IMR-90 (cell line): ENCODE measurements at regions of chr7 and their contacts with region 1.

Region 1: DNA sequence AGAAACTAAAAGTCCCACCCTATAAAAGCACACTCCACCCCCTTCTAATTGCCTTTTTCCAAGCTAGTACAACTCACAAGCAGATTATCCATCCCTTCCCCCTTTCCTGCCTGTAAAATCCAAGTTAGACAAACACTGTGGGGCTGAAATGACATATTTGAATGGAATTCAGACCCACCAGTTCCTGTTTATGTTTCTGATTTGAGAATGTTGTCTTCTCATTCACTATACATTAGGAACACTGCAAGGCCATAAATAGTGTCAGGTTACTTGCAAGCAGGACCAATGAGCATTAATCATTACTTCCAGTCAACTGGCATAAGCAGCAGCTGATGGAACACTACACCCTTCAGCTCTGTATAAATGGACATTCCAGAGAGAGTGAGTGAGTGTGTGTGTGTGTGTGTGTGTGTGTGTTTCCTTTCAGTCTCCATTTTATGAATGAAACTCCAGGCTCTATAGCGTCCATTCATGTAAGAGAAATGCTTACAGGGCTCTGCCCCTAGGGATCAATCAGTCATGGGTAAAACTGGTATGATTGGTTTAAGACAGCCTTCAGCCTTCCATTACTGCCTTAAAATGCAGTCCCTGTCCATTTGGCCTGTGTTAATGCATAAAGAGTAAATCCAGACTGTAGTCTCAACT is 69.3 kb downstream of the ETV1 start:
- DNase-seq: peak; percentile 100
- ATAC-seq: peak; percentile 94
- H3K4me3 ChIP-seq: no peak overlapping the region
- H3K27ac ChIP-seq: peak overlapping the region; percentile 76
- H3K4me1 ChIP-seq: peaks cover 1% of the 10 kb centered on the region; the same call in 1 of the 2 replicates
- H3K27me3 ChIP-seq: no peaks in the 10 kb centered on the region
- CTCF ChIP-seq: no peak
- POLR2A ChIP-seq: no peak
- RAD21 ChIP-seq: peak; percentile 18; the same call in 1 of the 2 replicates

Region 2: DNA sequence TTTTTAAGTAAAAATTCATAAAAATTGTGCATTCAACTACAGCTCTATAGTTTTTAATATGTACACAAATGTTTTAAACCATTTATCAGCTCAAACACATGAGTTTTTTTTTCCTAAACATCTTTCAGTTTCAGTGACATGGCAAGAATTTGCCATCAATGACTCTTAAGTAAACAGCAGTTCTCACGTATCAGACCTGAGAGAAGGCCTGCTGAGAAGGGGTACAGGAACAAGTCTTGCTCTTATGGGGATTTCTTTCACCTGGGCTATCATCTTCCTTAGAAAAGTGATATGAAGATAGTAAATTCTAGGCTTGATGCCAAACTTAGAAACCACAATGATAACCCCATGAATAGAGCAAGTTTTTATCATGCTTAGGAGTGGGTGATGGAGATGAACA is 765.0 kb before region 1 on chr7:
- CTCF ChIA-PET with region 1: no interaction called
- POLR2A ChIA-PET with region 1: no interaction called
- dilution Hi-C with region 1: no loop called
- in situ Hi-C with region 1: no loop called
- intact Hi-C with region 1: loop called (anchors 5 kb)
- DNase-seq: peak; percentile 10
- ATAC-seq: no peak
- H3K4me3 ChIP-seq: no peak overlapping the region
- H3K27ac ChIP-seq: no peak overlapping the region
- H3K4me1 ChIP-seq: no peaks in the 10 kb centered on the region
- H3K27me3 ChIP-seq: no peaks in the 10 kb centered on the region; the same call in 1 of the 2 replicates
- CTCF ChIP-seq: no peak
- POLR2A ChIP-seq: no peak
- RAD21 ChIP-seq: no peak

Region 3: DNA sequence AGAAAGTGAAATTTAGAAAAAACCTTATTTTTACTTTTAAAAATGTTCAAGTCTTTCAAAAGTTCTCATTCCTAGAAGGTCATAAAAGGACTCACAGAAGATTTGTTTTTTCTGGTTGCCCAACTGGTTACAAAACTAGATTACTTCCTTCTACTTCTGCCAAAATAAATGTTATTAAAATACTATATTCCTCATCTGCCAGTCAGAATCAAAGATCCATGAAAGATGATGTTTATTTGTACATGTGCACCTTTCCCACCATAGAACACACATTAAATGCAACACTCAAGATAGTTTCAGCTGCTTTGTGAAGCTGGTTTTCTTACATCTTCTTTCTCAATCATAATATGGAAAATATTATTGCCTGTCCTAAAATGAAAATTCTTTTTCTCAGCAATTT is 396.1 kb before region 1 on chr7:
- CTCF ChIA-PET with region 1: interaction called, 3 read pairs
- POLR2A ChIA-PET with region 1: no interaction called
- dilution Hi-C with region 1: no loop called
- in situ Hi-C with region 1: no loop called
- intact Hi-C with region 1: loop called (anchors 2 kb)
- DNase-seq: no peak
- ATAC-seq: no peak
- H3K4me3 ChIP-seq: no peak overlapping the region
- H3K27ac ChIP-seq: no peak overlapping the region
- H3K4me1 ChIP-seq: no peaks in the 10 kb centered on the region
- H3K27me3 ChIP-seq: no peaks in the 10 kb centered on the region
- CTCF ChIP-seq: no peak
- POLR2A ChIP-seq: no peak
- RAD21 ChIP-seq: no peak

Region 4: GRCh38 chr7:13725591-13725990 is 194.6 kb before region 1 on chr7:
- CTCF ChIA-PET with region 1: no interaction called
- POLR2A ChIA-PET with region 1: no interaction called
- dilution Hi-C with region 1: no loop called
- in situ Hi-C with region 1: no loop called
- intact Hi-C with region 1: loop called (anchors 5 kb)
- DNase-seq: no peak
- ATAC-seq: no peak
- H3K4me3 ChIP-seq: no peak overlapping the region
- H3K27ac ChIP-seq: no peak overlapping the region
- H3K4me1 ChIP-seq: no peaks in the 10 kb centered on the region
- H3K27me3 ChIP-seq: no peaks in the 10 kb centered on the region
- CTCF ChIP-seq: 0 out of 2 replicates have a peak, but pooled peaks have one; percentile 5
- POLR2A ChIP-seq: no peak
- RAD21 ChIP-seq: 0 out of 2 replicates have a peak, but pooled peaks have one; percentile 6

Region 5: GRCh38 chr7:13850185-13850752 is 69.9 kb before region 1 on chr7:
- CTCF ChIA-PET with region 1: no interaction called
- POLR2A ChIA-PET with region 1: no interaction called
- dilution Hi-C with region 1: no loop called
- in situ Hi-C with region 1: no loop called
- intact Hi-C with region 1: loop called (anchors 1 kb)
- DNase-seq: peak; percentile 99
- ATAC-seq: peak; percentile 87
- H3K4me3 ChIP-seq: no peak overlapping the region
- H3K27ac ChIP-seq: peak overlapping the region; percentile 91
- H3K4me1 ChIP-seq: peaks cover 10% of the 10 kb centered on the region
- H3K27me3 ChIP-seq: no peaks in the 10 kb centered on the region
- CTCF ChIP-seq: no peak
- POLR2A ChIP-seq: no peak
- RAD21 ChIP-seq: peak; percentile 30; the same call in 1 of the 2 replicates

Region 6: GRCh38 chr7:13872709-13873108 is 47.5 kb before region 1 on chr7:
- CTCF ChIA-PET with region 1: no interaction called
- POLR2A ChIA-PET with region 1: no interaction called
- dilution Hi-C with region 1: no loop called
- in situ Hi-C with region 1: no loop called
- intact Hi-C with region 1: no loop called
- DNase-seq: no peak
- ATAC-seq: no peak
- H3K4me3 ChIP-seq: no peak overlapping the region
- H3K27ac ChIP-seq: no peak overlapping the region
- H3K4me1 ChIP-seq: no peaks in the 10 kb centered on the region
- H3K27me3 ChIP-seq: no peaks in the 10 kb centered on the region
- CTCF ChIP-seq: no peak
- POLR2A ChIP-seq: no peak
- RAD21 ChIP-seq: no peak

Region 7: DNA sequence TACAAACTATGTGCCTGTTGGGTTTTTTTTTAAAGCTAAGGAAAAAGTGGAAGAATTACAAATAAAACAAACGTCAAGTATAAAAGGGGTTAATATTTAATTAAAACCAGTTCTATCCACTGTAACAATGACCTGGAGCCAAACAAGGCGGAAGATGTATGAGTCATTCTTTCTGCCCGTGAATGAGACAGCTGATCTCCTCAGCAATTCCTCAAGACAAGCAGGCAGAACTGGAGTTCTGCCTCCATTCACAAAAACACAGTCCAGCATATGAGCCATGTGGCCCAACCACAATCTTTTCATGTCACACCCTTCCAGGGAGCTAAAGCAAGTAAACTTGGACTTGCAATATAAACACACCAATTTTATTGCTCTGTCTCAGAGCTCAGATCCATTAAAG is 60.9 kb after region 1 on chr7:
- CTCF ChIA-PET with region 1: interaction called, 8 read pairs
- POLR2A ChIA-PET with region 1: no interaction called
- dilution Hi-C with region 1: no loop called
- in situ Hi-C with region 1: loop called (anchors 5 kb)
- intact Hi-C with region 1: loop called (anchors 1 kb)
- DNase-seq: peak; percentile 98
- ATAC-seq: peak; percentile 95
- H3K4me3 ChIP-seq: no peak overlapping the region
- H3K27ac ChIP-seq: no peak overlapping the region
- H3K4me1 ChIP-seq: peaks cover 6% of the 10 kb centered on the region
- H3K27me3 ChIP-seq: no peaks in the 10 kb centered on the region
- CTCF ChIP-seq: no peak
- POLR2A ChIP-seq: no peak
- RAD21 ChIP-seq: peak; percentile 34; the same call in 1 of the 2 replicates